ENCODE measurements at regions of chr1 and their contacts with region 1.

Region 1: DNA sequence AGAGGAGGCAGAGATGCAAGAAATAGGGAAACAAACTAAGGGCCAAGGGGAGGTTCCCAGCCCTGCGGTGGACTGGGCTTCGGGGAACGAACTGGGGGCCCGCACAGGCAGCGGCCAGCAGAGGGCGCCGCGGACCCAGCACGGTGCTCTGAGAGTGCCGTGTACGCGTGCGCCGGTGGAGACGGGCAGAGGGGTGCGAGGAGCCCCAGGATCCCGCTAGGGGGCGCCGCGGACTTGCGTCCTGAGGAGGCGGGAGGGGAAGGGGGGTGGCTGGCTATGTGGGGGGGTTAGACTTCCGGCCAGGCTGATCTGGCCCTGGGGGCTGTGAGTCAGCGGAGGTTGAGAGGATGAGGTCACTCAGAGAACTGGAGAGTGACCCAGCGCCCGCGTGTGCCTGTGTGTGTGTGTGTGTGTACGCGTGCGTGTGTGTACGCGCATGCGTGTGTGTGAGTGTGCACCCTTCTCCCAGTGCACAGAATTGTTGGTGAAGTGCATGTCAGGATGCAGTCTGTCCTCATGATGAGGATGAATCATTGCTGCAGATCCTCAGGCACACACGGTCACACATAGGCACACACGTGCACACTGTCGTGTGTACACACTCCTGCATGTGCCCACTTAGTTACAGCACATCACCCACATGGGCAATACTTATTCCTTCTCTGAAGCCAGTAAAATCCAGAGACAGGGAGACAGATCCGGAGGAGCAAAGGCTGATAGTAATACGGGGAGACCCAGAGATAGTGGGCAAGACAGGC is 17.0 kb downstream of the NES start:
- DNase-seq: peak; percentile 97 to 98 (median 97)
- H3K4me3 ChIP-seq: no peak overlapping the region
- H3K27ac ChIP-seq: peak overlapping the region; percentile 22 to 52
- H3K4me1 ChIP-seq: no peaks in the 10 kb centered on the region
- H3K27me3 ChIP-seq: no peaks in the 10 kb centered on the region
- CTCF ChIP-seq: peak; percentile 88 to 97 (median 97)
- EP300 ChIP-seq: no peak
- POLR2A ChIP-seq: peak; percentile 10

Region 2: DNA sequence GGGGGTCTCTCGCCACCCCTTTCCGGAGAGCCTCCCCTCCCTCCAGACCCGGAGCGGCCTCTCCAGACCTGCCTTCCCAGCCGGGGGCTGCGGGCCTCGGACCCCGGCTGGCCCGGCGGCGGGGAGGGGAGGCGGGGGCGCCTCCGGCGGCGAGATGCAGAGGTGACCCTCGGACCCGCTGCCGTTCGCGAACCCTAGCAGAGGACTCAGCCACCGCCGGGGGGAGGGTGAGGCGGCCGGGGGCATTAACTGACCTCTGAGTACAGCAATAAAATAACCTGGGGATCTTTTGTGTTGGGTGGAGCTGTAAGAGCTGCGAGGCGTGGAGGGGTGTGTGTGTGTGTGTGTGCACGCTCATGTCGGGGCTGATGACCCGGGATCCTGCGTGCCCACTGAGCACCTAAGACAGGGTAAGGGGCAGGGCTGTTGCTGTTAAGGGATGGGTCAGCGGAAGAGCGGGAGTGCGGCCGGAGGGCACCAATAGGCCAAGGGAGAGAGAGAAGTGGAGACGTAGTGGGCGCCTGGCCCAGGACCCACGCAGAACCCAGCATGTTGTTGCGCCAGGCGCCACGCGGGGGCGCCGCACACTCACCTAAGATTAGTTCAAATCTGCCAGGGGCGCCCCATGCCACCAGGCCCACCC is 34.6 kb before region 1 on chr1:
- intact Hi-C with region 1: loop called in 2 of 4 experiments (anchors 2 kb)
- DNase-seq: peak; percentile 22 to 74 (median 57)
- H3K4me3 ChIP-seq: peak overlapping the region; percentile 31
- H3K27ac ChIP-seq: peak overlapping the region in 1 of 2 donors; percentile 9
- H3K4me1 ChIP-seq: peaks cover 12% of the 10 kb centered on the region
- H3K27me3 ChIP-seq: no peaks in the 10 kb centered on the region
- CTCF ChIP-seq: peak in 2 of 3 donors; percentile 61 to 62
- EP300 ChIP-seq: no peak
- POLR2A ChIP-seq: no peak

Region 3: DNA sequence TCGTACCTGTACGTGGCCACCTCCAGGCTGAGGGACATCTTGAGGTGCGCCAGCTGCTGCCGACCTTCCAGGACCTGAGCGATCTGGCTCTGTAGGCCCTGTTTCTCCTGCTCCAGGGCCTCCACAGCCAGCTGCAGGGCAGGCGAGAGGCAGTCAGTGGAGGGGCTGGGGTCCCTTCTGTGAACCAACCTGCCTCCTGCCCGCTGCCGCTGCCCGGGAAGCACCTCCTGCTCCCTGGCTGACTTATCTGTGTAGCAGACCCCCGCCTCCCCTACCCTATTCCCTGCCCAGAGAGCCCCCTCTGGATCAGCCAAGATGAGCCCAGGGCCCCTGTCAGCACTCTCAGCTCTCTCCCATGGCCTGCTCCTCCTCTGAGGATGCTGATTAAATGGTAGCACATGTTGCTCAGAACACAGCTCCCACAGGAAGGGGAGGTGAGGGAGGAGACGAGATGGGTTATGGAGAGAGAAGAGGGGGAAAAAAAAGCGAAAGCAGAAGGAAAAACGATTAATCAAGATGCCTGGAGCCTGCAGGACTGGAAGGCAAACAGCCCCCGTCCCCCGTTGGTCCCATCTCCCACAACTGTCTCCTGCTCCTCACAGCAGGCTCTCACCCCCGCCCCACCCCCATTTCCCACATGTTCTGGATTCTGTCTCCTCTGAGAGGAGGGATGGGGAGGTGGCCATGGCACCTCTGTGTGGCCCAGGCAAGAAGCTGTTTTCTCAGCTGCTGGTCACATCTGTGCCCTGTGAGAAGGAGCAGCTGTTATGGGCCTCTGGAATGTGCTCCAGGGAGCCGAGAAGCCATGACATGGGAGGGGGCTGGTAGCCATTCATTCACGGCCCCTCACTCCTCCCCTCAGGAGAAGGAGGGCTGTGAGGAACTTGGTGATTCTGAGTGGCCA is 15.3 kb after region 1 on chr1:
- intact Hi-C with region 1: loop called in 1 of 4 experiments (anchors 2 kb)
- DNase-seq: peak in 1 of 5 donors; percentile 10
- H3K4me3 ChIP-seq: peak overlapping the region; percentile 37
- H3K27ac ChIP-seq: peak overlapping the region in 1 of 2 donors; percentile 33
- H3K4me1 ChIP-seq: no peaks in the 10 kb centered on the region
- H3K27me3 ChIP-seq: peaks cover 3% of the 10 kb centered on the region
- CTCF ChIP-seq: no peak
- EP300 ChIP-seq: no peak
- POLR2A ChIP-seq: no peak

Region 4: DNA sequence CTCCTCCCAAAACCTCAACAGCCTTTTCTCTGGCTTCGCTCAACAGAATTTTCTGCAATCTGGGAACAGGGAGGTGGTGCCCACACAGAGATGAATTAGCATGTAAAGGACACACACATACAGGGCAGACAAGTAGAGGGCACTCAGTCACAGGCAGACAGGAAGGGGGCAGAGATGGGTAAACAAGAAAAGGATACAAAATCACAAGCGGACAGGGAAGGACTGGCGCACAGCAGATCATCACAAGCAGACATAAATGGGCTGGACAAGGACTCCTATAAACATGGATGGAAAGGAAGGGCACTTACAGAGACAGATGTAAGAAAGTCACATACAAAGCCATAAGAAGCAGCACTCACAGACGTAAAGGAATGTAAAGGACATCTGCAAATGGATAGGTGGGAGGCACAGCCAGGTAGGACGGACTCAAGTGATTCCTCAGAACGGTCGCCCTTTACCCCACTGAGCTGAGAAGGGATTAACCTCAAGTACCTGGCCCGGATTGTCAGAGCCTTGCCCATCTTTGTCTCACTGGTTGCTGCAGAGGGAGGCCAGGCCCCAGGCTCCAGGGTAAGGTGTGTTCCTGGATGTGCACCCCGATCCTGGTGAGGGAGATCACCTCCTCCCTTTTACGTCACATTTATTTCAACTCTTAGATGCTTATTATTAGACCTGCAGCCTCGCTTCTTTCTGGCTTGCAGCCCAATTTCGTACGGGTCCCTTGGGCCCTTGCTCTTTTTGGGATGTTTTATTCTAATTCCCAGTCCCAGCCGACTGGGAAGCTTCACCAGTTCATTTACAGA is 106.3 kb after region 1 on chr1:
- intact Hi-C with region 1: no loop called
- DNase-seq: peak in 1 of 5 donors; percentile 77
- H3K4me3 ChIP-seq: peak overlapping the region; percentile 49
- H3K27ac ChIP-seq: peak overlapping the region in 1 of 2 donors; percentile 81
- H3K4me1 ChIP-seq: no peaks in the 10 kb centered on the region
- H3K27me3 ChIP-seq: no peaks in the 10 kb centered on the region
- CTCF ChIP-seq: no peak
- EP300 ChIP-seq: no peak
- POLR2A ChIP-seq: peak; percentile 26

Measured in ovary (tissue), 10 donors.